ENCODE measurements at regions of chr4 and their contacts with region 1.

Region 1: DNA sequence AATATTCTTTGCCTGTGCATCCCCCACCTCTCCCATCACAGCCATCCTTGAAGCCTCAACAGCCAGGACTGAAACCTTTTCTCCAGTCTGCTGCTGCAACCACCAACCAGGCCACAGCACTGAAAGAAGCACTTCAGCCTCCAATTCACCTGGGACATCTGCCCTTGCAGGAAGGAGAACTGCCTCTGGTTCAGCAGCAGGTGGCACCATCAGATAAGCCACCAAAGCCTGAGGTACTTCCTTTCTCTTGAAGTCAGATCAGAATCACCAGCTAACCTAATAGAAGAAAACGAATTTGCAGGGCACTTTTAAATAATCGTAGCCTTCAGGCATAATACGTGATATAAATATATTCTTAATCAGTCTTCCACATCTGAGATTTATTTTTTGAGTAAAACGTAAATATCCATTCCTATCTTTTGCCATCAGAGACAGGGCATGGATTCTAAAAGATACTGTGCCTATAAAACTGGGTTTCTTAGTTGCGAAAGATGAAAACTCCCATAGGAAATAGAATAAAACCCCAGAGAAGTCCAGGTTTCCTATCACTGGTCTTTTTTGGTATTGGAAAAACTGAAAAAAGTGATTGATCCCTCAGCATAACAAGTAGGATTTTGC is 9.5 kb downstream of the AMBN start:
- DNase-seq: peak; percentile 62
- ATAC-seq: peak; percentile 95
- H3K4me3 ChIP-seq: no peak overlapping the region
- H3K27ac ChIP-seq: no peak overlapping the region
- H3K4me1 ChIP-seq: no peaks in the 10 kb centered on the region
- H3K27me3 ChIP-seq: no peaks in the 10 kb centered on the region
- CTCF ChIP-seq: peak; percentile 87
- EP300 ChIP-seq: no peak
- POLR2A ChIP-seq: no peak
- RAD21 ChIP-seq: peak; percentile 69

Region 2: DNA sequence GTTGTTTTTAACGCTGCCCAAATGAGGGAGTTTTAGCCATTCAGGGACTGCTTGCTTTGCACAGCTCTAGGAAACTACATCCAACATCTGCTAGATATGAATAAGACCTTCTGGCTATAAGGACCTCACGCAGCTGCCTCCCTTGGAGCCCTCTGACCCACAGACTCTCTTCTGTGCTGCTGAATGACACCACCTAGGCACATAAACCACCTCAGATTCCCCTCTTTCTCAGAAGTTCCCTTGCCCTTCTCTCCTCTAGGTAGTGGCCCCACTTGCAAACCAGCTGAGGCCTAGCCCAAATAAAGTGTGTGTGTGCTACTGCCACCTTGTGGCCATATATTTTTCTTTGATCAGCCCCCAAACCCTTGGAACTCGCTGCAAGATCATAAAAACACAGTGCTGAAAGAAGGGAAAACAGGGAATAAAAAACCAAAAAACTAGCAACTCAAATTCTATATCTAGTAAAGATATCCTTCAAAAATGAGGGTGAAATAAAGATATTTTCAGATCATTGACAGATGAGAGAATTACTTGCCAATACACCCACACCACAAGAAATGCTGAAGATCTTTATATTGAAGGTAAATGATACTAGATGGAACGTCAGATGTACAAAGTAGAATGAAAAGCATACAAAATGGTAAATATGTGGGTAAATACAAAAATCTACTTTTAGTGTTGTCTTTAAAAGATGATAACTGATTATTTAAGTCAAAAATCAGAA is 1701.6 kb after region 1 on chr4:
- CTCF ChIA-PET with region 1: no interaction called
- POLR2A ChIA-PET with region 1: no interaction called
- in situ Hi-C with region 1: no loop called
- intact Hi-C with region 1: loop called (anchors 10 kb)
- DNase-seq: peak; percentile 34
- ATAC-seq: peak; percentile 93
- H3K4me3 ChIP-seq: no peak overlapping the region
- H3K27ac ChIP-seq: no peak overlapping the region
- H3K4me1 ChIP-seq: no peaks in the 10 kb centered on the region
- H3K27me3 ChIP-seq: no peaks in the 10 kb centered on the region
- CTCF ChIP-seq: peak; percentile 76
- EP300 ChIP-seq: no peak
- POLR2A ChIP-seq: no peak
- RAD21 ChIP-seq: no peak